ENCODE measurements at regions of chr14 and their contacts with region 1.

Region 1: GRCh38 chr14:92456215-92457015 is 57.2 kb upstream of the RIN3 start:
- DNase-seq: peak; percentile 76 to 82
- ATAC-seq: peak; percentile 83
- H3K4me3 ChIP-seq: no peak overlapping the region
- H3K27ac ChIP-seq: no peak overlapping the region
- H3K4me1 ChIP-seq: no peaks in the 10 kb centered on the region
- H3K27me3 ChIP-seq: no peaks in the 10 kb centered on the region

Region 2: DNA sequence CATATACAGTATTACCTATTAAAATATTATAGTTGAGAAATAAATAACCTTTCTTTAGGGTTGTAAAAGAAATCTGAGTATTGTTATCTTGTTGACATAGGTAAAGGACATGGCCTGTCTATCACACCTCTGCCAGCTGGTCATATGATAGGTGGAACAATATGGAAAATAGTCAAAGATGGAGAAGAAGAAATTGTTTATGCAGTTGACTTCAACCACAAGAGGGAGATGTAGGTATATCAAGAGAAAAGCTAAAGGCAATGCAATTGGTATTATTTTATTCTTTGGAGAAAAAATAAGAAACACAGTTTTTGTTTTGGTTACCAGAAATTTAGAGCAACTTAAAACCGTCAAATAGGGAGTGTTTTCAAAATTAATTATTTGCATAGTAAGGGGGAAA is 321.1 kb before region 1 on chr14:
- intact Hi-C with region 1: loop called (anchors 2 to 5 kb)
- DNase-seq: no peak
- ATAC-seq: no peak
- H3K4me3 ChIP-seq: no peak overlapping the region
- H3K27ac ChIP-seq: no peak overlapping the region
- H3K4me1 ChIP-seq: no peaks in the 10 kb centered on the region
- H3K27me3 ChIP-seq: no peaks in the 10 kb centered on the region

Region 3: GRCh38 chr14:92173668-92174067 is 282.7 kb before region 1 on chr14:
- intact Hi-C with region 1: no loop called
- DNase-seq: no peak
- ATAC-seq: no peak
- H3K4me3 ChIP-seq: no peak overlapping the region
- H3K27ac ChIP-seq: no peak overlapping the region
- H3K4me1 ChIP-seq: no peaks in the 10 kb centered on the region
- H3K27me3 ChIP-seq: no peaks in the 10 kb centered on the region

Region 4: DNA sequence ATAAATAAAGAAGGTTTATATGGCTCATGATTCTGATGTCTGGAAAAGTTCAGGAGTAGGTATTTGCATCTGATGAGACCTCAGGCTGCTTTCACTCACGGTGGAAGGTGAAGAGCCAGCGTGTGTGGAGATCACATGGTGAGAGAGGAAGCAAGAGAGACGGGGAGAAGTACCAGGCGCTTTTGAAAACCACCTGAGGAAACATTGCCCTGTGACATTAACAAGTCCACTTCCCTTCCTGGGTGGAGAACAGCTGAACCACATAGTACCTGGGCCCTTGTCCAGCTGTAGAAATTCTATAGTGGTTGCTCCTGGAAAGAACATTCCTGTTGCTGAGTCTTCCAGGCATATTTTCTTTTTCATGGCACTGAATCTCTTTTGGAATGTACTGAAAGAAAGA is 30.2 kb before region 1 on chr14:
- intact Hi-C with region 1: no loop called
- DNase-seq: peak in 1 of 2 donors; percentile 3
- ATAC-seq: no peak
- H3K4me3 ChIP-seq: no peak overlapping the region
- H3K27ac ChIP-seq: peak overlapping the region; percentile 55 to 59
- H3K4me1 ChIP-seq: peaks cover 0 to 2% of the 10 kb centered on the region in 2 donors
- H3K27me3 ChIP-seq: no peaks in the 10 kb centered on the region

Region 5: DNA sequence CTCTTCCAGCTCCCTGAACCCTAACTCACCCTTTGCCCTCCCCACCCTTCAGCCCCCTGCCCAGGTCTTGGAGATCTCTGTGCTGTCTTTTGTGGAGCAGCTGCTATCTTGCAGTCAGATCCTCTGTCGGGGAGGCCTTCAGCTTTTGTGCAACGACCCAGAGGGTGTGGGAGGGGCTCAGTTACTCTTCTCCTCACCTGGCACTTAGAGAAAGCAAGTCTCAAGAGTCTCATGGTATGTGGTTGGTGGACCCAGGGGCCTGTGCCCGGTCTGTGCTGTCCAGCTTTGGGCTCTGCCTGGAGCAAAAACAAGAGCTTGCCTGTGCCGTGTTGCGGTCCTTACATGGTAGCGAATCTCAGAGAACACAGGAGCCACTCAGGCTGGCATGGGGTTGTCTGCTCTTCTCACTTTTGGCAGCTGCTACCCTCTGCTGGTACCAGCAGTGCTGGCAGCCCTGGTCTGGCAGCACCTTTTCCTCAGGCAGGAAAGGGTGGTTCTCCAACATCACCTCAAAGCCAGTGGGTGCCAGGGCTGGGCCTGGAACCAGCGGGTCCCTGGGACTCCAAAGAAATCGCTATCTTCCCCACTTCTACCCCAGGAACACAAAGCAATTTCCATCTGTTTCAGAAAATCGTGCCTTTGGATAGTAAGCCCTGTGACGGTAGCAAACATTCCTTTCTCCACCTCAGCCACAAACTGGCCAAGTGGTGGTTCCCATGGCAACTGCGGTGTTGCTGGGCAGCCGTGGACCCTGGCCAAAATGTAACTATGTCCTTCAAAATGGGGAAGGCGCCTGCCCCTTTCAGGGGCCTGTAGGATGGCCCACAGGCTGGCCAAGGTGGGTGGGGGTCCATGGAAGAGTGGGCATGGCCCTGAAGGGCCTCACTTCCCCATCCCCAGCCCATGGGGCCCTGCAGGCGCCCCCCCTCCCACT is 147.2 kb after region 1 on chr14:
- intact Hi-C with region 1: loop called in 1 of 2 experiments (anchors 5 kb)
- DNase-seq: peak; percentile 77 to 88
- ATAC-seq: peak; percentile 84
- H3K4me3 ChIP-seq: no peak overlapping the region
- H3K27ac ChIP-seq: peak overlapping the region; percentile 90 to 98
- H3K4me1 ChIP-seq: peaks cover 0 to 3% of the 10 kb centered on the region in 2 donors
- H3K27me3 ChIP-seq: no peaks in the 10 kb centered on the region

Region 6: GRCh38 chr14:92686900-92687444 is 230.6 kb after region 1 on chr14:
- intact Hi-C with region 1: loop called in 1 of 2 experiments (anchors 5 kb)
- DNase-seq: peak; percentile 85 to 95
- ATAC-seq: peak; percentile 93
- H3K4me3 ChIP-seq: no peak overlapping the region
- H3K27ac ChIP-seq: no peak overlapping the region
- H3K4me1 ChIP-seq: no peaks in the 10 kb centered on the region
- H3K27me3 ChIP-seq: no peaks in the 10 kb centered on the region